IMR-90 (cell line): ENCODE measurements at regions of chr12 and their contacts with region 1.

Region 1: GRCh38 chr12:49188914-49189367 is at the start of gene TUBA1A:
- DNase-seq: peak; percentile 100
- ATAC-seq: peak; percentile 94
- H3K4me3 ChIP-seq: peak within 1 kb of the TSS; percentile 67
- H3K27ac ChIP-seq: peak within 1 kb of the TSS; percentile 66
- H3K4me1 ChIP-seq: no peaks in the 10 kb centered on the region; the same call in 1 of the 2 replicates
- H3K27me3 ChIP-seq: no peaks in the 10 kb centered on the region
- CTCF ChIP-seq: no peak
- POLR2A ChIP-seq: peak; percentile 99
- RAD21 ChIP-seq: no peak
- total RNA-seq, gene TUBA1A: 2,389 and 2,832 TPM in 2 replicates

Region 2: DNA sequence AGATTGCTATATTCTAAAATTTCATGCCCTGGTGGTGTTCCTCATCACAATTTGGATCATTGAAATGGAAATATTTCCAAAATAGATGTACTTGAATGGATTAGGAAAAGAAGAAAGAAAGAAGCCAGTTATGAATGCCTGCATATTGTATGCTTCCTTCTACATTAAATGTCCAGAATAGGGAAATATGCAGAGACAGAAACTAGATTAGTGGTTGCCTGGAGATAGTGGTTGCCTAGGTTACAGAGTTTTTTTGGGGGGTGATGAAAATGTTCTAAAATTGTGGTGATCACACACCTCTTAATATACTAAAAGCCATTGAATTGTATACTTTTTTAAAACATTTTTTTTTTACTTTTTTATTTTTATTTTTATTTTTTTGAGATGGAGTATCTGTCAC is 18.0 kb before region 1 on chr12:
- CTCF ChIA-PET with region 1: no interaction called
- POLR2A ChIA-PET with region 1: no interaction called
- dilution Hi-C with region 1: no loop called
- in situ Hi-C with region 1: no loop called
- intact Hi-C with region 1: no loop called
- DNase-seq: no peak
- ATAC-seq: no peak
- H3K4me3 ChIP-seq: no peak overlapping the region
- H3K27ac ChIP-seq: no peak overlapping the region
- H3K4me1 ChIP-seq: no peaks in the 10 kb centered on the region
- H3K27me3 ChIP-seq: peaks cover 2% of the 10 kb centered on the region; the same call in 1 of the 2 replicates
- CTCF ChIP-seq: no peak
- POLR2A ChIP-seq: no peak
- RAD21 ChIP-seq: no peak

Region 3: GRCh38 chr12:49223590-49224369 is 34.8 kb after region 1 on chr12:
- CTCF ChIA-PET with region 1: interaction called, 3 read pairs
- POLR2A ChIA-PET with region 1: interaction called, 16 read pairs
- dilution Hi-C with region 1: no loop called
- in situ Hi-C with region 1: no loop called
- intact Hi-C with region 1: no loop called
- DNase-seq: no peak
- ATAC-seq: no peak
- H3K4me3 ChIP-seq: no peak overlapping the region
- H3K27ac ChIP-seq: no peak overlapping the region; the same call in 1 of the 2 replicates
- H3K4me1 ChIP-seq: peaks cover 4% of the 10 kb centered on the region
- H3K27me3 ChIP-seq: no peaks in the 10 kb centered on the region
- CTCF ChIP-seq: no peak
- POLR2A ChIP-seq: no peak
- RAD21 ChIP-seq: no peak

Region 4: GRCh38 chr12:49232940-49233841 is 44.2 kb after region 1 on chr12:
- CTCF ChIA-PET with region 1: interaction called, 6 read pairs
- POLR2A ChIA-PET with region 1: interaction called, 16 read pairs
- dilution Hi-C with region 1: no loop called
- in situ Hi-C with region 1: loop called (anchors 10 kb)
- intact Hi-C with region 1: loop called (anchors 1 kb)
- DNase-seq: peak; percentile 56
- ATAC-seq: peak; percentile 68
- H3K4me3 ChIP-seq: peak overlapping the region; percentile 25
- H3K27ac ChIP-seq: peak overlapping the region; percentile 88
- H3K4me1 ChIP-seq: peaks cover 16% of the 10 kb centered on the region
- H3K27me3 ChIP-seq: no peaks in the 10 kb centered on the region
- CTCF ChIP-seq: peak; percentile 29; the same call in 1 of the 2 replicates
- POLR2A ChIP-seq: no peak
- RAD21 ChIP-seq: peak; percentile 25; the same call in 1 of the 2 replicates

Region 5: DNA sequence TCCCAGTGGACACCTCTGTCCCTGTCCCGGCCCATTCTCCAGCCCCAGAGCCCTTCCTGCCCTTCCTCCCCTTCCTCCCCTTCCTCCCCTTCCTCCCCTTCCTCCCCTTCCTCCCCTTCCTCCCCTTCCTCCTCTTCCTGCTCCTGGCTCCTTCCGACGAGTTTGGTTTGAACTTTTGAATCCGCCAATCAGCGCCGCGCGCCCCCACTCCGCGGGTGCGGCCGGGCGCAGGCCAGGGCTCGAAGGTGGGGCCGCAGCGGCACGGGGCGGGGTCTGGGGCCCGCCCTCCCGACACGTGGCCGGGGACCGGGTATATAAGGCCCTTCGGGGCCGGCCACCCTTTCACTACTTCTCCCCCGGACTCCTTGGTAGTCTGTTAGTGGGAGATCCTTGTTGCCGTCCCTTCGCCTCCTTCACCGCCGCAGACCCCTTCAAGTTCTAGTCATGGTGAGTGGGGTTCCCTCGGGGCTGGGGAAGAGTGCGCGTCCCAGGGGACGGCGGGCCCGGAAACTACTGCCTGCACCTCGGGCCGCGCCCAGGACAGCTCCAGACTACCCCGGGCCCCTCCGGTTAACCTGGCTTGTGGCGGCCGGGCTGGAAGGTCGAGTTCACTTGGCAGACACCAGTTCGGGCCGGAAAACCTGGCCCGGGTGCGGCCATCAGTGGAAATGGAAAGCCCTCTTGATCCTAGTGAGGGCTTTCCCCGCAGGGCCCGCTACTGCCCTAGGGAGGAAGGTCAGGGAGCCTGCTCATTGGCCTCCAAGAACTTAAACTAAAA is 76.0 kb after region 1 on chr12 and contains the start of gene TUBA1C:
- CTCF ChIA-PET with region 1: no interaction called
- POLR2A ChIA-PET with region 1: interaction called, 10 read pairs
- dilution Hi-C with region 1: no loop called
- in situ Hi-C with region 1: no loop called
- intact Hi-C with region 1: loop called (anchors 2 kb)
- DNase-seq: peak; percentile 90
- ATAC-seq: peak; percentile 85
- H3K4me3 ChIP-seq: peak within 1 kb of the TSS; percentile 77
- H3K27ac ChIP-seq: peak within 1 kb of the TSS; percentile 94
- H3K4me1 ChIP-seq: peaks cover 21% of the 10 kb centered on the region
- H3K27me3 ChIP-seq: no peaks in the 10 kb centered on the region
- CTCF ChIP-seq: no peak
- POLR2A ChIP-seq: peak; percentile 99
- RAD21 ChIP-seq: no peak
- total RNA-seq, gene TUBA1C: 1,144 and 1,420 TPM in 2 replicates